ENCODE measurements at regions of chr5 and their contacts with region 1.

Region 1: DNA sequence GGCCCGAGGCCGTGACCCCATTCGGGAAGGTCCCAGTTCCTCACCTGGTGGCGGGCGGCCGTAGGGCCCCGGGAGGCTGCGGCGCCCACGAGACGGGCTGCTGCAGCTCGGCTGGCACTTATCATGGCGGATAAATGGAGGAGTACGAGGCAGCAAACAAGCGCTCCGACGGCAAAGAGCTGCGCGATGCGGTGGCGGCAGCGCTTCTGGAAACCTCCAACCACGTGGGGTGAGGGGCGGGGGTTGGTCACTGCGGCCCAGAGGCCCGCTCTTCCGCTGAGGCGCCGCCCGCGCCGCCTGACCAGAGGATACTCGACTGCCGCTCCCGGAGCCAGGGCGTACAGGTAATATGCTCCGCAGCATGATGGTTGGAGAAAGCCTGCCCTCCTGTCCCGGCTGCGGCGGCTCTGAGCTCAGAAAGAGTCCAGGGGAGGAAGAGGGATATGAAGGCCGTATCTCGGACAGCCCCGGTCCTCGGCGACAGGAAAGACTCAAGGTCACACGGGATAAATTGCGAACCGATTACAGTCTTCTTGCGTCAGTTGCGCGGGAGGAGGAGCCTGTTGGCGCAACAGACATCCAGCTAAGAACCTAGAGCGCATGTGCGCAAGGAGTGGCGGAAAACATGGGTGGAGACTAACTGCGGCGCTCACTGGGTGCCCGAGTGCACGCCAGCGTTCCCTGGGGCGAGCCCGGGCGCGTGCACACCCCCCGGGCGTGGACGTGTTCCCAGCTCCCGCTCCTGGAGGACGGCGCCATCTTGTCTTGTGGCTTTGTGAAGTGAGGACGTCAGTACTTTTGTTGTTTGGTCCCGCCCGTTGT is at the start of gene HSPA9:
- DNase-seq: peak; percentile 98
- H3K4me3 Mint-ChIP-seq: peak within 1 kb of the TSS; percentile 99
- H3K27ac Mint-ChIP-seq: peak within 1 kb of the TSS; percentile 98
- H3K4me1 Mint-ChIP-seq: peaks cover 35% of the 10 kb centered on the region
- H3K27me3 Mint-ChIP-seq: no peaks in the 10 kb centered on the region
- total RNA-seq, gene HSPA9: 358 to 368 TPM

Region 2: DNA sequence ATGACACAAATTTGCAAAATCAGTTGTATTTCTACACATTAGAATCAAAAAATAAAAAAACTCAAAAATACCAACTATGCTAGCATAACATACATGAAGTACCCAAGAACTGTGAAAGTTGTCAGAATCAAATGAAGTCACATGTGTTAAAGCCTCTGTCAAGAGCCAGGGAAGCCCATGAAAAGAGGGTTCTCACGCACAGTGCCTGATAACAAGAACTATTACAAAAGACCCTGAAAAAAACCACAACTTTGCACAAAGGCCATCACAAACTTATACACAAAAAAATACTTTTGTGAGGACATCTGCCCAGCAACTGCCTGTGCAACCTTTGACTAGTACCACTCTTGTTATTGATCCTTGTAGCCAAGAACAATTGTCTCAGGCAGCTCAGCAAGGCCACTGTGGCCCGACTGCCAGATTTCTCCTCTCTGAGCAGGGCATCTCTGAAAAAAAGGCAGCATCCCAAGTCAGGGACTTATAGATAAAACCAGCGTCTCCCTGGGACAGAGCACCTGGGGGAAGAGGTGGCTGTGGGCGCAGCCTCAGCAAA is 792.3 kb before region 1 on chr5:
- CTCF ChIA-PET with region 1: no interaction called
- POLR2A ChIA-PET with region 1: no interaction called
- intact Hi-C with region 1: no loop called
- DNase-seq: no peak
- H3K4me3 Mint-ChIP-seq: no peak overlapping the region
- H3K27ac Mint-ChIP-seq: no peak overlapping the region
- H3K4me1 Mint-ChIP-seq: no peaks in the 10 kb centered on the region
- H3K27me3 Mint-ChIP-seq: peaks cover 6% of the 10 kb centered on the region

Region 3: DNA sequence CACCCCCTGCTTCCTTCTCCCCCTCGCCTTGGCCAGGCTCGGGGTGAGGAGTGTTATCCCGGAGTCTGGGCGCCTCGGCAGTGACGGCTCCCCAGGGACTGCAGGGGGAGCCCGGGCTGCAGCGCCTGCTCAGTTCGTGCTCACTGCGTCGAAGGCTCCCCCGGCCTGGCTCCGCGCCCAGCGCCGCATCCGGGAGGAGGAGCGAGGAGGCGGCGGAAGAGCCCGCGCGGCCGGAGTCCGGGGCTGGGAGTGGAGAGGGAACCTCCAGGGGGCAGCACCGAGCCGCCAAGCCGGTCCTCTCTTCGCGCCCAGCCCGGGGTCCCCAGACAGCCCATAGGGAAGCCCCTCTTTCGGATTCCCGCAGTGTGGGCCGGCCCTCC is 111.4 kb before region 1 on chr5:
- CTCF ChIA-PET with region 1: interaction called, 6 read pairs
- POLR2A ChIA-PET with region 1: interaction called, 5 read pairs
- intact Hi-C with region 1: loop called (anchors 1 kb)
- DNase-seq: peak; percentile 95
- H3K4me3 Mint-ChIP-seq: peak overlapping the region; percentile 83
- H3K27ac Mint-ChIP-seq: peak overlapping the region; percentile 95
- H3K4me1 Mint-ChIP-seq: peaks cover 50% of the 10 kb centered on the region
- H3K27me3 Mint-ChIP-seq: no peaks in the 10 kb centered on the region

Region 4: DNA sequence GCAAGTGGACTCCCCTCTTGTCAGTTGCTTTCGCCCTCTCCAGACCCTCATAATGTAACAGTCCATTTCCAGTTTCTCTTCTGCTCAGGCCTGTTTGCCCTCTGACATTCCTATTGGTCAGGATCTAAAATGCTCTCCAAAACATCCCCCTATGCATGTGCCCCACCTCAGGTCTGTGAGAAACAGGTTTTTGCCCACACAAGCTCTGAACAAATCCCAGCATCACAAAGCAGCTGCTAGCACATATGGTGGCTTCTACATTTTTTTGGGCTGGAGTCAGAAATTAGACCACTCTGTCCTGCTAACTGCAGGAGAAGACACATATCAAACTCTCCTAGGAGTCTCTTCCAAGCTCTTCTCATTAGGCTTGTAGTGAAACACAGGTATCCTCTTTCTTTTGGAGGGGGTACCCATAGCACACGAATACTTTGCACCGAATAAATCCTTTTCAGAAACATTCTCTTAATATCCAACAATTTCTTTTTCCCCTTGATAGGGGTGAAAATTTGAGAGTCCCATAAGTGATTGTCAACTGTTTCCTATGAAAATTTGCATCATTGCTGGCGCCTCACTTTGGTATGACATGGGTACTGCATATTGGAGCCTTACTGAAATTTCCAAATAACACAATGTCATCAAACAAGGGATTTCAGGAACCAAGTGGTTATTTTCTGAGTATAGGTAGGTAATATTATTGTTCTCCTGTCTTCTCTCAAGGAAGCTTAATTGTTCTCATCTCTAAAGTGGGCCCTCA is 19.1 kb after region 1 on chr5:
- CTCF ChIA-PET with region 1: interaction called, 17 read pairs
- POLR2A ChIA-PET with region 1: no interaction called
- intact Hi-C with region 1: no loop called
- DNase-seq: no peak
- H3K4me3 Mint-ChIP-seq: no peak overlapping the region
- H3K27ac Mint-ChIP-seq: no peak overlapping the region
- H3K4me1 Mint-ChIP-seq: no peaks in the 10 kb centered on the region
- H3K27me3 Mint-ChIP-seq: peaks cover 20% of the 10 kb centered on the region

Region 5: DNA sequence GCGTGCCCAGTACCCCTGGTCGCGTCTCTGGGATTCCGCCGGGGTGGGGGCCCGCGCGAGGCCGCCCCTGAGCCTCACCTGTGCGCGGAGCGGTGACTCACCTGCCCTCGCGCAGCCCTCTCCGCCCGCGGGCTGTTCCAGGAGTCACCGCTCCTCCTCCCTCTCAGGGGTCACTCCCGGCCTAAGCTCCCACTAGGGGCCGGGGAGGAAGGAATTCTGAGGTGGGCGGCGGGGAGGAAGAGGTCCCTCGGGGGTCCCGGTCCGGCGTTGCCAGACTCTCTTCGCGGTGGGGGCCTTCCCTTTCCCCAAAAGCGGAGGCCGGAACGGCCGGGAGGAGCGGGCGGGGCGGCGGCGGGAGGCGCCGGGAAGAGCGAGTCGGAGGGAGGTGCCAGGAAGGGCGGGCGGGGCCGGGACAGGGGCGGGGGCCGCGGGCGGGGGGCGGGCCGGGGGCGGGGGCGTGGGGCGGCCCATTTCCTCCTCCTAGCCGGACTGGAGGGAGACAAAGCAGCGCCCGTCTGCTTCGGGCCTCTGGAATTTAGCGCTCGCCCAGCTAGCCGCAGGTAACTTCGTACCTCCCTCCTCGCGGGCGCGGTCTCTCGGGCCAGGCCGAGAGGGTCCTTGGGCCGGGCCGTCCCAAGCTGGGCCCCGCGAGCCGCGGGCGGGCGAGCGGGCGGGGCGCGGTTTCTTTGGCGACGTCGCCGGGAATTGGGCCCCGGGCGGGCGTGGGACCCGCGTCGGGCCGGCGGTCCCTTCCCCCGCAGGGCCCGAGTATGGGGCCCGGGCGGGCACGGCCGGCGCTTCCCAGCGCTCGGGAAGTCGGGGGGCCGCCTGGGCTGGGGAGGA is 177.8 kb after region 1 on chr5 and contains the start of gene CTNNA1:
- CTCF ChIA-PET with region 1: interaction called, 3 read pairs
- POLR2A ChIA-PET with region 1: interaction called, 3 read pairs
- intact Hi-C with region 1: loop called (anchors 10 kb)
- DNase-seq: peak; percentile 70
- H3K4me3 Mint-ChIP-seq: peak within 1 kb of the TSS; percentile 70
- H3K27ac Mint-ChIP-seq: no peak within 1 kb of the TSS
- H3K4me1 Mint-ChIP-seq: peaks cover 34% of the 10 kb centered on the region
- H3K27me3 Mint-ChIP-seq: peaks cover 21% of the 10 kb centered on the region
- total RNA-seq, gene CTNNA1: 82.8 to 89.5 TPM

Region 6: DNA sequence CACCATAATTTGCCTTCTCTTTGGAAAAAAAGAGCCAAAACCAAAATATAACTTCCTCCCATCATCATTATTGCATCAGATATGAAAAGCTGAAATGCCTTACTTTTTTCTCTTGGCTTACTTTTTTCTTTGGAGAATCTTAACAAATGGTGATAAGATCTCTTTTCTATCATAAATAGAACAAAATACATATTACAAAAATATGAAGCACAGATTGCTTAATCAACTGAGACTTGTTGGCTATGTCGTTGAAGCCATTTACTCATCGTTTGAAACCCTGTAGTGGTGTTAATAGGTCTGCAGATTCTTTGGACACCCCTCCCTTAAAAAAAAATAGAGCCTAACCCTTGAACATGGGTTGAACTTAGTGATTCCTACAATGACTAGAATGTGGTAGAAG is 210.8 kb after region 1 on chr5:
- CTCF ChIA-PET with region 1: no interaction called
- POLR2A ChIA-PET with region 1: no interaction called
- intact Hi-C with region 1: no loop called
- DNase-seq: no peak
- H3K4me3 Mint-ChIP-seq: no peak overlapping the region
- H3K27ac Mint-ChIP-seq: no peak overlapping the region
- H3K4me1 Mint-ChIP-seq: peaks cover 2% of the 10 kb centered on the region
- H3K27me3 Mint-ChIP-seq: peaks cover 3% of the 10 kb centered on the region

Region 7: GRCh38 chr5:139341650-139342422 is 766.4 kb after region 1 on chr5 and contains the start of gene PAIP2:
- CTCF ChIA-PET with region 1: no interaction called
- POLR2A ChIA-PET with region 1: interaction called, 11 read pairs
- intact Hi-C with region 1: no loop called
- DNase-seq: peak; percentile 98
- H3K4me3 Mint-ChIP-seq: peak within 1 kb of the TSS; percentile 97
- H3K27ac Mint-ChIP-seq: peak within 1 kb of the TSS; percentile 95
- H3K4me1 Mint-ChIP-seq: peaks cover 46% of the 10 kb centered on the region
- H3K27me3 Mint-ChIP-seq: no peaks in the 10 kb centered on the region
- total RNA-seq, gene PAIP2: 104 to 110 TPM

Region 8: GRCh38 chr5:139560752-139561654 is 985.6 kb after region 1 on chr5 and contains the start of gene UBE2D2:
- CTCF ChIA-PET with region 1: no interaction called
- POLR2A ChIA-PET with region 1: no interaction called
- intact Hi-C with region 1: loop called (anchors 10 kb)
- DNase-seq: peak; percentile 98
- H3K4me3 Mint-ChIP-seq: peak within 1 kb of the TSS; percentile 90
- H3K27ac Mint-ChIP-seq: peak within 1 kb of the TSS; percentile 92
- H3K4me1 Mint-ChIP-seq: peaks cover 25% of the 10 kb centered on the region
- H3K27me3 Mint-ChIP-seq: no peaks in the 10 kb centered on the region
- total RNA-seq, gene UBE2D2: 271 to 285 TPM

Measured in activated CD4-positive, alpha-beta memory T cell treated with anti-CD3 and anti-CD28 coated beads for 36 hours (primary cell).